IMR-90 (cell line): ENCODE measurements at regions of chr15 and their contacts with region 1.

Region 1: GRCh38 chr15:50876989-50877360 is 31.5 kb upstream of the AP4E1 start:
- DNase-seq: peak; percentile 93
- ATAC-seq: peak; percentile 90
- H3K4me3 ChIP-seq: peak overlapping the region; percentile 14; the same call in 1 of the 2 replicates
- H3K27ac ChIP-seq: no peak overlapping the region
- H3K4me1 ChIP-seq: peaks cover 7% of the 10 kb centered on the region
- H3K27me3 ChIP-seq: peaks cover 8% of the 10 kb centered on the region; the same call in 1 of the 2 replicates
- CTCF ChIP-seq: peak; percentile 96
- POLR2A ChIP-seq: 0 out of 2 replicates have a peak, but pooled peaks have one; percentile 27
- RAD21 ChIP-seq: peak; percentile 92

Region 2: DNA sequence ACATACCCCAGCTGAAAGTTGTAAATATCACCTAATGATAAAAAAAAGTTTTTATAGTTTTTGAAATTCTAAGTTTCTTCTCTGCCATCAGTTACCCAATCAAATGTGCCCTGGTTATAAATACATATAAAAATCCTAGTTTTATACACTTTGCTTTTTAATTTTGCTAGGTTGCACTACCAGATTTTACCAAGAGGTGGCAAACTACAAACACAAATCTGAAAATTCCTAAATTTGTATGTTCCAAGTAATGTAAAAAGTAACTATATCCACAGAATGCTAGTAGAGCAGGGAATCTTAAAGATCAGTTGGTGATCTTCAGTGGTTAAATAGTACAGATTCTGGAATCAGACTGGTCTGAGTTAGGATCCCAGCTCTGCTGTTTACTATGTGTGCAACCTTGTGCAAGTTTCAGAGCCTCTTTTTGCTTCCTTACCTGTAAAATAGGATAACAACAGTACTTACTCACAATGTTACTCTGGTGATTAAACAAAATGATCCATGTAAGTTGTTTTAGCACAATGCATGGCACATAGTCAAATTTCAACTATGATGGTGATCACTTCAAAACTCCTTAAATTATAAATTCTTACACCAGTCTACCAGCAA is 201.3 kb before region 1 on chr15:
- CTCF ChIA-PET with region 1: interaction called, 10 read pairs
- POLR2A ChIA-PET with region 1: no interaction called
- dilution Hi-C with region 1: no loop called
- in situ Hi-C with region 1: no loop called
- intact Hi-C with region 1: loop called (anchors 1 kb)
- DNase-seq: peak; percentile 59
- ATAC-seq: peak; percentile 53; the same call in 1 of the 2 replicates
- H3K4me3 ChIP-seq: no peak overlapping the region
- H3K27ac ChIP-seq: no peak overlapping the region
- H3K4me1 ChIP-seq: peaks cover 8% of the 10 kb centered on the region
- H3K27me3 ChIP-seq: no peaks in the 10 kb centered on the region
- CTCF ChIP-seq: peak; percentile 76
- POLR2A ChIP-seq: no peak
- RAD21 ChIP-seq: peak; percentile 71

Region 3: DNA sequence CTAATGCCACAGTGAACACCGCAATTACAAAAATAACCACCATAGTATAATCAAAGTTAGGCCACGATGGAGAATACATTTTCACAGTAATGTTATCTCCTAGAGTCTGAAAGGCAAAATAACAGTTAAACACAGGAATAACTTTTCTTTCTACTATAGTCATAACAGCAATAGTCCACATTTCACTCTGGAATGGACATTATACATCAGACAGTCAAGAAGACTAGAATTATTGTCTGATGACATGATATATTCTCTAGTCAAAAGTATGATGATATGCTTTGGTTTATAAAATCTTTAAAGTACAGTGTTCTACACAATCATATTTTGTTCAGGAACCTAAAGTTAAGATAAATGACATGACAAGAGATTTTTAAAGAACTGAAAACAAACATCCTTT is 129.5 kb before region 1 on chr15:
- CTCF ChIA-PET with region 1: no interaction called
- POLR2A ChIA-PET with region 1: no interaction called
- dilution Hi-C with region 1: no loop called
- in situ Hi-C with region 1: no loop called
- intact Hi-C with region 1: loop called (anchors 5 kb)
- DNase-seq: no peak
- ATAC-seq: peak; percentile 50
- H3K4me3 ChIP-seq: no peak overlapping the region
- H3K27ac ChIP-seq: peak overlapping the region; percentile 28; the same call in 1 of the 2 replicates
- H3K4me1 ChIP-seq: no peaks in the 10 kb centered on the region; the same call in 1 of the 2 replicates
- H3K27me3 ChIP-seq: no peaks in the 10 kb centered on the region
- CTCF ChIP-seq: no peak
- POLR2A ChIP-seq: no peak
- RAD21 ChIP-seq: no peak

Region 4: DNA sequence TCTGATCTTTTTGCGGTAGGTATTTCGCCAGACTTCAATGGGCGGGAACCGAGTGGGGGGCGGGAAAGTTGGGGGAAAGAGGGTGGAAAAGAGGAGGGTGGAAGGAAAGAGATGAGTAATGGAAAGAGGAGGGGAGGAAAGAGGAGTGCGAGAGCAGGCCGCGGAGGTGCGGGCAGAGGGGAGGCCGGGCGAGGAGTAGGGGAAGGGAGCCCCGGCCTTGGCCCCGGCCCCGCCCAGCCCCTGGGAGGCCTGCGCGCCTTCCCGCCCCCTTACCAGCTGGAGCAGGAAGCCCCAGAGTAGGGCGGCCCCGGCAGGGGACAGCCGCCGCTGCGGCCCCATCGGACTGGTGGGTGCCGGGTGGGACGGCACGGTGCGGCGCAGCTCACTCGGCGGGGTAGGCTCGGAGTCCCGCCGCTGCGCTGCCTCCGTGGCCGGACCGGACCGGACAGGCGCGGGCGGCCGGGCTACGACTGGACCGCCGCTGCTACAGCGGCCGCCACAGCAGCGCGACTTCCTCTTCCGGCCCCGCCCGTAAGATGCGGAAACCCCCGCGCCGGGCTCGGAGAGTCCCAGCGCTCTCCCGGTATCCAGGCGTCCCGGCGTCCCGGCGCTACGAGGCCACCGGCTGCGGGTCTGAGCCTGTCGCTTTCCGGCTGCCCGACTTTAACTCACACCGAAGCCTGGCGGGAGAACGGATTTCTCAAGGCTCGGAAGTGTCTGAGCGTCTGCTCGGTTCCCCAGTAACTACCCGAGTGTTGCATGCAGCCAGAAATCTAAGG is 111.6 kb before region 1 on chr15 and contains the start of gene SPPL2A:
- CTCF ChIA-PET with region 1: no interaction called
- POLR2A ChIA-PET with region 1: no interaction called
- dilution Hi-C with region 1: no loop called
- in situ Hi-C with region 1: no loop called
- intact Hi-C with region 1: loop called (anchors 2 kb)
- DNase-seq: peak; percentile 84
- ATAC-seq: peak; percentile 98
- H3K4me3 ChIP-seq: peak within 1 kb of the TSS; percentile 57
- H3K27ac ChIP-seq: peak within 1 kb of the TSS; percentile 91
- H3K4me1 ChIP-seq: peaks cover 2% of the 10 kb centered on the region
- H3K27me3 ChIP-seq: no peaks in the 10 kb centered on the region
- CTCF ChIP-seq: no peak
- POLR2A ChIP-seq: peak; percentile 79
- RAD21 ChIP-seq: no peak
- total RNA-seq, gene SPPL2A: 53.8 and 82.5 TPM in 2 replicates